ENCODE measurements at regions of chr5 and their contacts with region 1.

Region 1: DNA sequence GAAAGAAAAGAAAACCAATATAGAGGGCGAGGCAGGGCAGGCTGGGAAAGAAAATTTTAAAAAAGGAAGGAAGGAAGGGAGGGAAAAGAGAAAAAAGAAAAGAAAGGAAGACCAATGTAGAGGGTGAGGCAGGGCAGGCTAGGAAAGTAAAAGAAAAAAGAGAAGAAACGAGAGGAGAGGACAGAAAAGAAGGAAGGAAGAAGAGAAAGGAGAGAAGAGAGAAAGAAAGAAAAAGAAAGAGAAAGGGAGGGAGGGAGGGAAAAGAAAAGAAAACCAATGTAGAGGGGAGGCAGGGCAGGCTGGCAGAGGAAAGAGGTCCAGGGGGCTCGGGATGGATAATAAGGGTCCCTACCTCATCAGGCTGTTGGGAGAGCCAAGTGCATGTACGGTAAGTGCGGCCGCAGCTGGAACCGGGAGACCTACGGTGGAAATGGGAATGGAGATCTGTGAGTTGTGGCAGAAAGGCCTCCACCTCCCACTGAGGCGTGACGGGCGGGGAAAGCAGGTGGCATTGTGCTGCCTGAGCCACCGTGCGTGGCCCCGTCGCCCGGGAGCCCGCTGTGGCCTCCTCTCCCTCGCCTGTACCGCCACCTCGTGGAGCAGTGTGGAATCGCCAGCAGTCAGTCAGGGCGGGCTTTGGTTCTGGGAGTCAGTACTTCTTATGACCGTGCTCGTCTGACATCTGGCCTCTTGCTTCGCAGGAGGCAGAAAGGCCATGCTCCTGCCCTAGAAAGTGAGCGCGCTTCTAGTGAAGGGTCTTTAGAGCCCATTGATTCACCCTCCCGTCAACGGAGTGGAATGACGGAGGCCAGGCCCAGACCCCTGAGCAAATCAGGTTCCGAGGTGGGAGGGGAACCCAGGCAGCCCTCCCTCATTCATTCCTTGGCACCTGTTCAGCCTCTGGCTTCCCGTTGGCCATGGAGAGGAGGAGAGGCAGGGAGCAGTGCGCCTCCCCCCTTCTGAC is 10.4 kb upstream of the NHP2 start:
- DNase-seq: peak; percentile 85 to 94 (median 87)
- ATAC-seq: peak; percentile 100
- H3K4me3 ChIP-seq: no peak overlapping the region
- H3K4me1 ChIP-seq: peaks cover 8% of the 10 kb centered on the region
- CTCF ChIP-seq: peak; percentile 100

Region 2: DNA sequence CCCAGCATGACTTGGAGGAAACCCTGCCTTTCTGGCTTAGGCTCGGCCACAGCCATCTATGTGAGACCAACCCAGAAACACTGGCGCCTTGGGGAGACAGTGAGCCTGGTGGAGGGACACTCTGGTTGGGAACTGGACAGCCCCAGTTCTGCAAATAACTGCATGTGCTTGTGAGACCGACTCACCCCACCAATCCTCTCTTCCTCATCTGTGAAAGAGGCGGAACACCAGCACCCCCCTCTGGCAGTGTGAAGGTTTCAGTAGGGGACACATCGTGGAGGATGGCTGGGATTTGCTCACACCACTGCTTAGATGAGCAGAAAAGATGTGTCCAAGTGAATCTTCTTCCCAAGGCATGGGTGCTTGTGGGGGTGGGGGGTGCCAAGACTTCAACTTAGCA is 94.1 kb before region 1 on chr5:
- intact Hi-C with region 1: loop called (anchors 5 to 10 kb)
- DNase-seq: peak in 1 of 3 donors; percentile 20
- ATAC-seq: peak; percentile 56
- H3K4me3 ChIP-seq: no peak overlapping the region
- H3K4me1 ChIP-seq: no peaks in the 10 kb centered on the region
- CTCF ChIP-seq: no peak

Region 3: GRCh38 chr5:178075840-178076548 is 88.1 kb before region 1 on chr5:
- intact Hi-C with region 1: loop called (anchors 5 to 10 kb)
- DNase-seq: peak; percentile 60 to 88 (median 81)
- ATAC-seq: peak; percentile 90
- H3K4me3 ChIP-seq: no peak overlapping the region
- H3K4me1 ChIP-seq: no peaks in the 10 kb centered on the region
- CTCF ChIP-seq: peak; percentile 72

Region 4: DNA sequence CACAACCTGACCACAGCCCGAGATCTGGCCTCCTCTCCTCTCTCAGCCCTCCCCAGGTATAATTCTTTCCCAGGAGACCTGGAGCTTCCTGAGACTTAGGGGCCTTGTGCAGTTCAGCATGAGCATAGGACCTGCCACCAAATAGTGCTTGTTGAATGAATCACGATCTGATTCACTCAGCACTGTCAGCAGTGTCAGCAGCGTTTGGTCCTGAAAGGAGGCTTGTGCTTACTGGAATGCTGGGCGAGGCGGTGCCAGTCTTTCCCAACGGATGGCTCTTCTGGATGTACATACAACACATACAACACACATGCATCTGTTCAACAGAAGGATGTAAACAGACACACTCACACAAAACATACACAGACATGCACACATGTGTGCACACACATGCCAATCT is 252.9 kb after region 1 on chr5:
- intact Hi-C with region 1: no loop called
- DNase-seq: no peak
- ATAC-seq: no peak
- H3K4me3 ChIP-seq: no peak overlapping the region
- H3K4me1 ChIP-seq: no peaks in the 10 kb centered on the region
- CTCF ChIP-seq: no peak